Activated CD4-positive, alpha-beta memory T cell treated with anti-CD3 and anti-CD28 coated beads for 36 hours (primary cell): ENCODE measurements at regions of chr15 and their contacts with region 1.

Region 1: DNA sequence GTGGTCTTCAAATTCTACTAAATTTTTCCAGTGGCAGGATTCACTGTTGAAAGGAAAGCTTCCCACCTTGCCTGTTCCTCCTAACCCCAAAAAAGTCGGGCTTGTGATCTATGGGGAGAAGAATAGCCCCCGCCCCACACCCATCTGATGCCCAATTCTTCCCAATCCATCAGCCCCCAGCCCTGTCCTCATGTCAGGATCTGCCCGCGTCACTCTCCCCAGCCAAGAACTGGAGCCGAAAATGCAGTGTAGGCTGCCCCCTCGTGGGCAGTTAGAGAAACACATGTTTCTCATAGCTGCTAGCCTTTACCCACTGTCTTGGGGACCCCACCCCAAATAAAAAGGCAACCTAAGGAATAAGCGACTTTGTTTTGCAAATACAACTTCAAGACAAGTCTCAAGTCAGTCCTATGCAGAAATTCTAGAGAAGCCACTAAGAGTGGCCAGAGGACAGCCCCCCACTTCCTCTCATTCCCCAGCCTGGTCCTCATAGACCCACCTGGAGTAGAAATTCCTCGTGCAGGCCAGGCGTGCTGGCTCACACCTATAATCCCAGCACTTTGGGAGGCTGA is 13.0 kb upstream of the CSK start:
- DNase-seq: peak; percentile 80
- H3K4me3 Mint-ChIP-seq: no peak overlapping the region
- H3K27ac Mint-ChIP-seq: no peak overlapping the region
- H3K4me1 Mint-ChIP-seq: peaks cover 21% of the 10 kb centered on the region
- H3K27me3 Mint-ChIP-seq: peaks cover 5% of the 10 kb centered on the region

Region 2: GRCh38 chr15:74373731-74374647 is 394.9 kb before region 1 on chr15:
- CTCF ChIA-PET with region 1: interaction called, 6 read pairs
- POLR2A ChIA-PET with region 1: no interaction called
- intact Hi-C with region 1: loop called (anchors 5 kb)
- DNase-seq: peak; percentile 97
- H3K4me3 Mint-ChIP-seq: peak overlapping the region; percentile 71
- H3K27ac Mint-ChIP-seq: peak overlapping the region; percentile 35
- H3K4me1 Mint-ChIP-seq: peaks cover 24% of the 10 kb centered on the region
- H3K27me3 Mint-ChIP-seq: peaks cover 3% of the 10 kb centered on the region

Region 3: DNA sequence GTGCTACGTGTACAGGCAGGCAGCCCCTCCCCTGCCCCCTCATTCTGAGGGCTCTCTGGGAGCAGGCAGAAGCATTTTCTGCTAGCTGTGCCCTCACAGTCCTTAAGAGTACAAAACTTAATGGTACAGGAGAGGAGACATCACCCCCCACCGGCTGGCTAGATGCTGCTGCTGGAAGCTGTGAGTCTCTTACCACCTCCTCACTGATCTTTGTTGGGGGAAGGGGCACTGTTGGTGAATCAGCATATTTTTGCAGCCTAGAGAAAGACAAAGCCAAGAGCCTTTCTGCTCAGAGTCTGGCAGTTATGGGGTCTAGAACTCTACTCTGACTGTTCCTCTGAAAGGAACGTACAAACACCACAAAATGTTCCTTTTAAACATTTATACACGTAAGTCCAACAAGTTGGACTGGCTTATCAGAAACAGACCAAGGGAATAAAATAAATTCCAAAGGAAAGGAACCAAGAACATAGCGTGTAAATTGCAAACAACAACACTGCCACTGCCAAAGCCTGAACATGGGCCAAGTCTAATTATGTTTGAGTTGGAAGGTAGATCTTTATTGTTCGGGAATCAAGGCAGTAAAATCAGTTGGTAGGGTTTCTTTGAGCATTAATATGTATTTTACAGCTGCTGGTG is 126.0 kb before region 1 on chr15:
- CTCF ChIA-PET with region 1: interaction called, 434 read pairs
- POLR2A ChIA-PET with region 1: interaction called, 3 read pairs
- intact Hi-C with region 1: no loop called
- DNase-seq: no peak
- H3K4me3 Mint-ChIP-seq: no peak overlapping the region
- H3K27ac Mint-ChIP-seq: no peak overlapping the region
- H3K4me1 Mint-ChIP-seq: peaks cover 6% of the 10 kb centered on the region
- H3K27me3 Mint-ChIP-seq: no peaks in the 10 kb centered on the region

Region 4: GRCh38 chr15:74781431-74782258 is 12.8 kb after region 1 on chr15 and contains the start of gene CSK:
- CTCF ChIA-PET with region 1: interaction called, 1,220 read pairs
- POLR2A ChIA-PET with region 1: interaction called, 10 read pairs
- intact Hi-C with region 1: loop called (anchors 2 kb)
- DNase-seq: peak; percentile 83
- H3K4me3 Mint-ChIP-seq: peak within 1 kb of the TSS; percentile 90
- H3K27ac Mint-ChIP-seq: peak within 1 kb of the TSS; percentile 99
- H3K4me1 Mint-ChIP-seq: peaks cover 50% of the 10 kb centered on the region
- H3K27me3 Mint-ChIP-seq: no peaks in the 10 kb centered on the region
- total RNA-seq, gene CSK: 260 to 262 TPM

Region 5: GRCh38 chr15:74799856-74800547 is 31.1 kb after region 1 on chr15:
- CTCF ChIA-PET with region 1: interaction called, 1,220 read pairs
- POLR2A ChIA-PET with region 1: interaction called, 12 read pairs
- intact Hi-C with region 1: loop called (anchors 1 kb)
- DNase-seq: peak; percentile 93
- H3K4me3 Mint-ChIP-seq: no peak overlapping the region
- H3K27ac Mint-ChIP-seq: peak overlapping the region; percentile 91
- H3K4me1 Mint-ChIP-seq: peaks cover 49% of the 10 kb centered on the region
- H3K27me3 Mint-ChIP-seq: no peaks in the 10 kb centered on the region

Region 6: GRCh38 chr15:74826364-74826819 is 57.5 kb after region 1 on chr15 and contains the start of gene CPLX3:
- CTCF ChIA-PET with region 1: interaction called, 44 read pairs
- POLR2A ChIA-PET with region 1: no interaction called
- intact Hi-C with region 1: no loop called
- DNase-seq: peak; percentile 54
- H3K4me3 Mint-ChIP-seq: no peak within 1 kb of the TSS
- H3K27ac Mint-ChIP-seq: no peak within 1 kb of the TSS
- H3K4me1 Mint-ChIP-seq: peaks cover 14% of the 10 kb centered on the region
- H3K27me3 Mint-ChIP-seq: peaks cover 17% of the 10 kb centered on the region
- total RNA-seq, gene CPLX3: not detected

Region 7: GRCh38 chr15:74906446-74907162 is 137.7 kb after region 1 on chr15 and contains the start of gene FAM219B:
- CTCF ChIA-PET with region 1: interaction called, 103 read pairs
- POLR2A ChIA-PET with region 1: no interaction called
- intact Hi-C with region 1: no loop called
- DNase-seq: peak; percentile 89
- H3K4me3 Mint-ChIP-seq: peak within 1 kb of the TSS; percentile 99
- H3K27ac Mint-ChIP-seq: peak within 1 kb of the TSS; percentile 97
- H3K4me1 Mint-ChIP-seq: peaks cover 32% of the 10 kb centered on the region
- H3K27me3 Mint-ChIP-seq: no peaks in the 10 kb centered on the region
- total RNA-seq, gene FAM219B: 63.0 to 70.1 TPM

Region 8: GRCh38 chr15:75019916-75020315 is 251.1 kb after region 1 on chr15:
- CTCF ChIA-PET with region 1: no interaction called
- POLR2A ChIA-PET with region 1: no interaction called
- intact Hi-C with region 1: no loop called
- DNase-seq: no peak
- H3K4me3 Mint-ChIP-seq: no peak overlapping the region
- H3K27ac Mint-ChIP-seq: no peak overlapping the region
- H3K4me1 Mint-ChIP-seq: peaks cover 5% of the 10 kb centered on the region
- H3K27me3 Mint-ChIP-seq: no peaks in the 10 kb centered on the region